AG04450 (cell line): ENCODE measurements at regions of chr2 and their contacts with region 1.

Region 1: DNA sequence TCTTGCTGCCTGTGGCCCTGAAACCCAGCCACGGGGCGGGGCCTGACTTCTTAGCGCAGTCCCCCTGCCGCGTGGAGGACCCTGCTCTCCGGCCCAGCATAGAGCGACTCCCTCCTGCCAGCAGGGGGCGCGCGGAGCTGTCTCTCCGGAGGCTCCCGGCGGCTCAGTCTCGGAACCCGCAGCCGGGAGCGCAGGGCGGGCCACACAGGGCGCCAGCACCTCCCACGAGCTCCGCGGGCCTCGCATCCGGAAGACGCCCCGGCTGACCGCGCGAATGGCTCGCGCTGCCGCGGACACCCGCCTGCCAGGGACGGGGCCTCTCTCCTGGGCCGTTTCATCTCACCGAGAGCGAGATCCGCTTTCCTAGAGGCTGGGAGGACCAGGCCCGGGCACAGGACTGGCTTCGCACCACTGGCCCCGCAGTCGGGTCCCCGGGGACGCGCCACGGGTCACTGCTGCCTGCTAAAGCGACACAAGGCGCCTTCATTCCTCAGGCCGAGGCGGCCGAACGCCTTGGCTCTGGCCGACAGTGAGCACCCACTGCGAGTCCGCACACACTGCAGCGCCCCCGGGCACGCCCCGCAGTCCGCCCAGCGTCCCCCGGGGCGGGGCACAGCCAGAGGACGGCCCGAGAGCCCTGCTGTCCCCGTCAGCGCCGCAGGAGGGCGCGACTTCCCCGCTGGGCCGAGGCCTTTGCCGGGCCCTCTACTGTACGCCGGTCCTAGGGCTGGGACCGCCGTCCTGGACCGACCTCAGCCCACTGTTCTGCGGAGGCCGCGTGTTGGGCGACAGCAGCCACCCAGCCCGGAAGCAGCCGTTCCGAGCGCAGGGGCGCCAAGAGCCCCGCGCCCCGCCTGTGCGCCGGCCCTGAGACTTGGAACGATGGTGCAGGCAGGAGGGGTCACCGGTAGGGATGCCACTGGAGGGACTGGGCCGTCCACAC is 39.0 kb upstream of the ARHGEF4 start:
- DNase-seq: peak; percentile 63
- H3K4me3 ChIP-seq: peak overlapping the region; percentile 76
- H3K27ac ChIP-seq: peak overlapping the region; percentile 68
- H3K27me3 ChIP-seq: peaks cover 5% of the 10 kb centered on the region
- CTCF ChIP-seq: peak; percentile 85

Region 2: DNA sequence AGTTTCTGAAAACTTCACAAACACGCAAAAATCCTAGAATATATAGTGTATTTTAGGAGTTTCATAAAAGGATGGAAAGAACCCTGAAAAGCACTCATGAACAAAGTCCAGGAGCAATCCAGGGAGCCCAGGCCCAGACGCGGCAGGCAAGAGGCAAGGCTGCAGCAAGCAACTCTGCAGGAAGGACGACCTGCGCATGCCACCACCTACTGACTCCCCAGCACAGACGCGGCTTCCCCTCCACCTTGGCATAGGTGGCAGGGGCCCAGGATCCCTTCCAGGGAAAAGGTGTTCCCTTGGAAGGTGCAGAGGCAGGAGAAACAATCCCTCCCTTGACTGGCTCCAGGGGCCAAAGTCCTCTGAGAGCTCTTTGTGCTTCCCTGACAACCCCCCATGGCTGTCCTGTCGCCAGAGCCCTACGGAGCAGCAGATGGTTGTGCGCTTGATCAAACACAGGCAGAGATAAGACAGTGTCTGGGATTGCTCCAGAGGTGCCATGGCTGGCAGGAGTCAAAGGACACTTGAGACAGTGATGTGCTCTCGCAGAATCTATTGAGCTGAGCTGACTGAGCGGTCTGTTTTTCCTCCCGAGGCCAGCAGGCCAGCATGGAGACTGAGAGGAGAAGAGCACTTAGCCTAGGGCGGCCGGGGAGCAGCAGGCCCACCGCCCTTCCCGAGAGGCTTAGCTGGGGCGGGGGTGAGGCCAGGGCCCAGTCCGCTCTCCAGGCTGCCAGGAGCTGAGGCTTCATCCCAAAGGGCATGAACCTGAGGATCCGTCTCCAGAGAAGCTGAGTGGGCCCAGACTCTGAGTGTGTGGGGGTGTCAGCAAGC is 53.3 kb before region 1 on chr2:
- CTCF ChIA-PET with region 1: no interaction called
- POLR2A ChIA-PET with region 1: no interaction called
- DNase-seq: no peak
- H3K4me3 ChIP-seq: no peak overlapping the region
- H3K27ac ChIP-seq: no peak overlapping the region
- H3K27me3 ChIP-seq: peaks cover 3% of the 10 kb centered on the region
- CTCF ChIP-seq: no peak

Region 3: DNA sequence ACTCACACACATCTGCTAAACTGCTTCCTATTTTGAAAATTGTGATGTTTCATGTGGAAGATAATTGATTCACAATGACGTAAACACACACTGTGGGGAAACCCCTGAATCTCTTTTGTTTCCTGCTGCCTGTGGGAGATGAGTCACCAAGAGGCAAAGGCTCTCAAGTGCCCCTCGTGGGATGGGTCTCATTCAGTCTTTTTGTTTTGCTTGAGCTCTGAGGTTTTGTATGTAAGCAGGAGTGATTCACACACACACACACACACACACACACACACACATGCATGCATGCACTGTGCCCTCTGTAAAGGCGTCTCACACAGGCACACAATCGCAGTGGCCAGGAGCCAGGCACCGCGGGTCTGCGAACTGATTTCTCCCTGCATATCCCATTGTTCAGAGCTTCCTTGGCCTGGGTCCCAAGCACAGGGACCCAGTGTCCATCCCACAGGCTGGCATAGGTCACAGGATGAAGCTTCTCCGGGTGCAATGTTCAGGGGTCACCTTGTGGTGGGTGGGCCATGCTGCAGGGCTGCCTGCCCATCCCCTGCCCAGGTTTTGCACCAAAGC is 26.8 kb after region 1 on chr2:
- CTCF ChIA-PET with region 1: interaction called, 13 read pairs
- POLR2A ChIA-PET with region 1: no interaction called
- DNase-seq: peak; percentile 95
- H3K4me3 ChIP-seq: no peak overlapping the region
- H3K27ac ChIP-seq: peak overlapping the region; percentile 52
- H3K27me3 ChIP-seq: peaks cover 5% of the 10 kb centered on the region
- CTCF ChIP-seq: no peak

Region 4: GRCh38 chr2:130834091-130834930 is 36.5 kb after region 1 on chr2:
- CTCF ChIA-PET with region 1: interaction called, 12 read pairs
- POLR2A ChIA-PET with region 1: no interaction called
- DNase-seq: no peak
- H3K4me3 ChIP-seq: no peak overlapping the region
- H3K27ac ChIP-seq: peak overlapping the region; percentile 39
- H3K27me3 ChIP-seq: peaks cover 31% of the 10 kb centered on the region
- CTCF ChIP-seq: no peak

Region 5: GRCh38 chr2:130873700-130874346 is 76.1 kb after region 1 on chr2:
- CTCF ChIA-PET with region 1: interaction called, 152 read pairs
- POLR2A ChIA-PET with region 1: no interaction called
- DNase-seq: peak; percentile 46
- H3K4me3 ChIP-seq: no peak overlapping the region
- H3K27ac ChIP-seq: no peak overlapping the region
- H3K27me3 ChIP-seq: peaks cover 7% of the 10 kb centered on the region
- CTCF ChIP-seq: peak; percentile 81

Region 6: DNA sequence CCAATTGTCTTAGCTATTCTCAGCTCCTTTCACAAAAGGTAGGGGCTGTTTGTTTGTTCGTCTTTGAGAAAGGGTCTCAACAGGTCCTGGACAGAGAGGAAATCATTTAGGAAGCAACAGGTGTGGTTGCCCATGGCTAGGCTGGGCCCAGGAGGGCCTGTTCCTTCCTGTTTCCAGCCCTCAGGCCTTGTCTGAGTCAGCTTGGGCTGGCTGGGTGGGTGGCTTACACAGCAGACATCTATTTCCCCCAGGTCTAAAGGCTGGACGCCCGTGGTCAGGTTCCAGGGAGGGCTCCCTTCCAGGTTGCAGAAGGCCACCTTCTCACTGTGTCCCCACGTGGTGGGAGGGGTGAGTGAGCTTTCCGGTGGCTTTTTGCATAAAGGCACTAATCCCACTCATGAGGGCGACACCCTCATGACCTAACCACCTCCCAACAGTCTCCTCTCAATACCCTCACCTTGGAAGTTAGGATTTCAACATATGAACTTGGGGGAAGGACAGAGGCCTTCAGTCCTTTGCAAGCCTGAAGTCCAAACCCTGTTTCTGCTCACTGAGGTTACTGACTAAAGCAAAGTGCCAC is 84.4 kb after region 1 on chr2:
- CTCF ChIA-PET with region 1: interaction called, 152 read pairs
- POLR2A ChIA-PET with region 1: no interaction called
- DNase-seq: no peak
- H3K4me3 ChIP-seq: no peak overlapping the region
- H3K27ac ChIP-seq: no peak overlapping the region
- H3K27me3 ChIP-seq: peaks cover 3% of the 10 kb centered on the region
- CTCF ChIP-seq: no peak

Region 7: DNA sequence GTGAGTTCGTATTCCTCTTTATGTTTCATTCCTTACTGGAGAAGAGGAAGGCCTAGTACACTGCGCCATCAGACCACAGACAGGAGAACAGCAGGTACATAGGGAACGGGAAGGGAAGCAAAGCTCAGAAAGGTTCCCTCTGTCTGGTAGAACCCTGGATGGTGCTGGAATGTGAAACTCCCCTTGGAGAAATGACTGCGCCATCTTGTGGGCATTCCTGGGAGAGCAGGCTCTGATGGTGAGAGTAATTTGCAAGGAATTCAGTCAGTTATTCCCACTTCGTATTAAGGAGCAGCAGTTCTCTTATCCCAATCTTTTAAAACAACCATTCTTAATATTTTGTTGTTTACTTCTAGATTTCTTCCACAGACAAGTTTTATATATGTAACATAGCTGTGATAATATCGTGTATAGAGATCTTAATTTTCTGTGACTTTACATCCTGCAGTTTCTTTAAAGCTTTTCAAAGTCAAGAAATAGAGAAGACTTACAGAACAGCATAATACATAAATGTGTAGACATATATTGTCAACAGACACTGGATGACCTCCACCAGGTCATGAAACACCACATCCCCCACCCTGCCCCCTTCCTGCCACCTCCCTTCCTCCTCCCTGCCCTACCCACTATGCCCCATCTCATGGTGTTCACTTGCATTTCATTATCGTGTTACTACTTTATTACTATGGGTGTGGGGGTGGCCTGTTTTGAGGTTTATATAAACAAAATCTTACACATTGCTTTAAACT is 122.8 kb after region 1 on chr2:
- CTCF ChIA-PET with region 1: interaction called, 45 read pairs
- POLR2A ChIA-PET with region 1: no interaction called
- DNase-seq: peak; percentile 45
- H3K4me3 ChIP-seq: no peak overlapping the region
- H3K27ac ChIP-seq: no peak overlapping the region
- H3K27me3 ChIP-seq: peaks cover 6% of the 10 kb centered on the region
- CTCF ChIP-seq: peak; percentile 92